GM10248 (cell line): ENCODE measurements at regions of chr1 and their contacts with region 1.

Region 1: DNA sequence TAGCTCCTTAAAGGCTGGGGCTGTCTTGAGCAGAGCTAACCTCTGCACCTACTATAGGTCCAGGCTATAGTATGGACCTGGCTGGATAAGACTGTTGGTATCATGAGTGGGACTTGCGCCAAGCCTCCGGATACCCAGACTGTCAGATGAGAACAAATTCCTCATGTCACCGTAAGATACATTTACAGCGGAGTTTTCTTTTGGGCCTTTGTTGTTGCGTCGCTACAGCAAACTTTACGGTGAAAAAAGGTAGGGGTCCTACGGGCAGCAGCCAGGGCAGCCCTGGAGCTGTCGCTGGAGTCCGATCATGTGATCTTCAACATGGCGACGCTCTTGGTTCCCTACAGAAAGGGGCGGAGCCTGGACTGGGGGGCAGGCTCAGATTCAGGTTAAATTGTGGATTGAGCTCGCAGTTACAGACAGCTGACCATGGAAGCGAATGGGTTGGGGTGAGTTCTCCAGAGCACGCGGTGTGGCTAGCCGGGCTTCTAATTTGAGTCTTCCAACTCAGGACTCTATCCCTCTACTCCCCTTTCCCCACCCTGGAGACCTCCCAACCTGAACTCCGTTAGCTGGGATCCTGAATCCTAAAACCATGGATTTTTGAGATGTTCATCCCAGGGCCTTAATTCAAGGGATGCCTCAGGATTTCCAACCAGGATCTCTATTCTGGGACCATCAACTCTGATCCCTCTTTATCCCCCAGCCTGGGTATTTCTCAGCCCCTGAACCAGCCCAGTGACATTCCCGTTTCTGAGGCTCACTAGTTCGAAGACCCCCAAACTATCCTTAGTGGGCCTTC is at the start of gene UROD:
- DNase-seq: peak; percentile 95
- CTCF ChIP-seq: no peak

Region 2: GRCh38 chr1:44792783-44793714 is 219.0 kb before region 1 on chr1:
- CTCF ChIA-PET with region 1: interaction called, 14 read pairs
- POLR2A ChIA-PET with region 1: no interaction called
- DNase-seq: no peak
- CTCF ChIP-seq: no peak

Region 3: GRCh38 chr1:45033356-45033755 is 21.3 kb after region 1 on chr1:
- CTCF ChIA-PET with region 1: interaction called, 12 read pairs
- POLR2A ChIA-PET with region 1: no interaction called
- DNase-seq: peak; percentile 65
- CTCF ChIP-seq: no peak

Region 4: DNA sequence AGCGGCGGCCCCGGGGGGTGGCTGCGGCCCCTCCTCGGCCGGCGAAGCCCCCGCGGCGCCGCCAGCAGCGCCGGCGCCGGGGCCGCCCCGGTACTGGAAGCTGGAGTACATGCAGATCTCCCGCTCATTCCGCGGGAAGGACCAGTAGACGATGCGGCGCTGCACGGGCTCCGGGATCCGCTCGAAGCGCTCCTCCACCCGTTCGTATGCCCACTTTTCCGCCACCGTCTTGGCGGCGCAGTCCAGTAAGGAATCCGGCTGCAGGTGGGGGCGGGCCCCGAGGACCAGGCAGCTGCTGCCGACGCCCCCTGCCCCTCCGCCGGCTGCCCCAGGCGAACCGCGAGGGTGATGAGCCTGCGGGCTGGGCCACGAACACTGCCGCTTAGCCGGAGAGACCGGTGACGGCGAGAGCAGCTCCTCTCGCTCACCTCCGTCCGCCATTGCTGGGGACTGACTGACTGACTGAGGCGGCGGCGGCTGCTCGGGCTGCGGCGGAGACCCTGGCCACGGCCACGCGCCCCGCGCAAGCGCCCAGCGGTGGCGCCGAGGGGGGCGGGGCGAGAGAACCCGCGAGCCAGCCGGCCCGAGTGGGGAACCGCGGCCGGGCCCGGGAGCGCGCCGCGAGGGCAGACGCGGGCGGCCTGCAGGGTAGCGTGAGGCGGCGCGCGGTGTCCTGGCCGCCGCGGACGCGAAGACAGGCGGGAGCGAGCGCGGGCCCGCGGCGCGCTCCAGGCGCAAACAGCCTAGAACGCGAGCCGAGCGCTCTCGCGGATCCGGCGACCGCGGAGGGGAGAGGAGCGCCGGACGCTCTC is 194.1 kb after region 1 on chr1 and contains the start of gene ZSWIM5:
- CTCF ChIA-PET with region 1: no interaction called
- POLR2A ChIA-PET with region 1: no interaction called
- DNase-seq: peak; percentile 74
- CTCF ChIP-seq: no peak